ENCODE measurements at regions of chr3 and their contacts with region 1.

Region 1: DNA sequence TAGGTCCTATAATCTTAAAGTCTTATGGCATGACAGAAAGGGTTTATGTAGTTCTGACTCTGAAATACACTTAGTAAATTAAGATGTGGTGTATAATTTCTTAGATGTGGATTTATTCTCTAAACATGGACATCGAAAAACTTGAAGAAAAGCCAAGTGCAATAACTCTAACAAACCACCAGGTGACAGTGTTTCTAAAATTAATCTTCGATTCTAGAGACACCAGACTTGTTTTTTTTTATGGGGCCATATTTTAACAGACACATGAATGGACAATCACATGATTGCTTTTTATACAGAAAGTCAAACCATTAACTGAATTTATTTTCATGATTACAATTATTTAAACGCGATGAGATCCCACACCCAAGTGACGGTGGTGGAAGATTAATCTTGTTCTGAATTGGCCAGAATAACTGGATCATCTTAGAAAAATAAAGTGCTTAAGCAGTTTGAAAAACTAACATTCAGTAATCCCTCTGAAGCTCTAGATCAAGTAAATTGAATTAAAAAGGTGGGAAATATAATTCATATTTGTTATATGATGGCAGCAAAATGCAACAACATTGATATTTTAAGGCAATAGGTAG is 305.1 kb downstream of the LSAMP start:
- DNase-seq: no peak

Region 2: GRCh38 chr3:116757315-116757714 is 617.1 kb after region 1 on chr3:
- intact Hi-C with region 1: loop called (anchors 10 kb)
- DNase-seq: no peak

Measured in cardiac septum (tissue), 1 donor.